GM12878 (cell line): ENCODE measurements at regions of chr17 and their contacts with region 1.

Region 1: GRCh38 chr17:39939588-39940419 is 12.3 kb downstream of the LRRC3C start:
- DNase-seq: peak; percentile 71
- ATAC-seq: peak; percentile 88
- H3K4me3 ChIP-seq: no peak overlapping the region
- H3K27ac ChIP-seq: peak overlapping the region; percentile 23
- H3K4me1 ChIP-seq: peaks cover 17% of the 10 kb centered on the region
- H3K27me3 ChIP-seq: no peaks in the 10 kb centered on the region
- CTCF ChIP-seq: peak; percentile 49 to 54 (median 50); a peak in 4 of 6 replicates
- EP300 ChIP-seq: peak; percentile 18 to 56; a peak in 2 of 4 replicates
- POLR2A ChIP-seq: no peak
- RAD21 ChIP-seq: peak; percentile 31; the same call in 1 of the 2 replicates

Region 2: DNA sequence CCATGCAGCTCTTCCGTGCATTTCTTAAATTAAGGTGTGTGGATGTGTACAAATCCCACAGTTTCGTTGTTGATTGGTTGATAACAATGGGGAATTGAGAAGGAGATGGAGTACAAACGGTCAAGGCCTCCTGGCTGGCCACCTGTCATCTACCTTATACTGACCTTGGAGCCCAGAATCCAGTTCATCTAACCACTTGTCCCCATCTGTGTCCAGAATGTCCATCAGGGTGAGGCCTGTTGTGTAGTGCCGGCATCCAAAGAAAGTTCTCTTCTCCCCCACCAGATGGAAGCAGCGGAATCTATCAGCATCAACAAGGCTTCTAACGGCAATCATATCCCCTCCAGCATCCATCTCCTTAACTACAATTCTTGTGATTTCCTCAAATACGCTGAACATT is 22.9 kb before region 1 on chr17:
- CTCF ChIA-PET with region 1: interaction called, 9 read pairs
- POLR2A ChIA-PET with region 1: interaction called, 13 read pairs
- RAD21 ChIA-PET with region 1: interaction called, 17 read pairs
- SMC1A ChIA-PET with region 1: interaction called, 40 read pairs
- in situ Hi-C with region 1: no loop called
- intact Hi-C with region 1: no loop called
- DNase-seq: no peak
- ATAC-seq: no peak
- H3K4me3 ChIP-seq: no peak overlapping the region
- H3K27ac ChIP-seq: no peak overlapping the region
- H3K4me1 ChIP-seq: peaks cover 33% of the 10 kb centered on the region
- H3K27me3 ChIP-seq: no peaks in the 10 kb centered on the region
- CTCF ChIP-seq: no peak
- EP300 ChIP-seq: no peak
- POLR2A ChIP-seq: no peak
- RAD21 ChIP-seq: no peak

Region 3: GRCh38 chr17:39927101-39927928 is 12.5 kb before region 1 on chr17 and contains the starts of genes LRRC3C and ORMDL3:
- CTCF ChIA-PET with region 1: interaction called, 33 read pairs
- POLR2A ChIA-PET with region 1: interaction called, 64 read pairs
- RAD21 ChIA-PET with region 1: interaction called, 35 read pairs
- SMC1A ChIA-PET with region 1: interaction called, 46 read pairs
- in situ Hi-C with region 1: no loop called
- intact Hi-C with region 1: no loop called
- DNase-seq: no peak
- ATAC-seq: peak; percentile 76
- H3K4me3 ChIP-seq: peak within 1 kb of the TSS; percentile 87
- H3K27ac ChIP-seq: peak within 1 kb of the TSS; percentile 82
- H3K4me1 ChIP-seq: peaks cover 22% of the 10 kb centered on the region
- H3K27me3 ChIP-seq: no peaks in the 10 kb centered on the region
- CTCF ChIP-seq: no peak
- EP300 ChIP-seq: 0 out of 4 replicates have a peak, but pooled peaks of 1 of the 2 experiments have one; percentile 10
- POLR2A ChIP-seq: peak; percentile 84
- RAD21 ChIP-seq: no peak
- polyA plus RNA-seq, gene LRRC3C: not detected
- polyA plus RNA-seq, gene ORMDL3: 8.8 to 21.1 TPM

Region 4: DNA sequence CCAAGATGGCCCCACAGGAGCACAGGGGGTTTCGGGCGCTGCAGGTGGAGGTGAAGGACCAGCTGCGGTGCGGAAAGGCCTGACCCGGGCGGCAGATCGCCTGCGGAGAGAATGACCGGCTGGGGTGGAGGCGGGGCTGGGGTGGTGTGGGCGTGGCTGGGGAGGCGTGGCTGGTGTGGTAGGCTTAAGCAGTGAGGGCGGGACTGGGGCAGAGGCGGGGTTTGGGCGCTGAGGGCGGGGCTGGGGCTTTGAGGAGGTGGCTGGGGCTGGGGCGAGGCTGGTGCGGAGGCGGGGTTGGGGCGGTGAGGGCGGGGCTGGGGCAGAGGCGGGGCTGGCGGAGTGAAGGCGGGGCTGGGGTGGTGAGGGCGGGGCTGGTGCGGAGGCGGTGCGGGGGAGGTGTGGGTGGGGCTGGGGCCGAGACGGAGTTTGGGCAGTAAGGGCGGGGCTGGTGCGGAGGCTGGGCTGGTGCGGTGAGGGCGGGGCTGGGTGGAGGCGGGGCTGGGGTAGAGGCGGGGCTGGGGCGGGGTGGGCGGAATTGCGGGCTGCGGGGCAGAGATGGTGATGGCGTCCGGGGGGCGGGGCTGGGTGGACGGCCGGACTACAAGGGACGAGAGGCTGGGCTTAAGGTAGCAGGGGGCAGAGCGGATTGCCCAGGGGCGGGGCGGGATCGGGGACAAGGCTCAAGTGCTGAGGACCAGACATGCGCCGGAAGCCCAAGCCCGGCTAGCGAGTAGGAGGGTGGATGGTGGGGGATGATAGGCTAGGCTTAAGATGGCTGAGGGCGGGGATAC is 13.1 kb after region 1 on chr17:
- CTCF ChIA-PET with region 1: interaction called, 98 read pairs
- POLR2A ChIA-PET with region 1: interaction called, 5 read pairs
- RAD21 ChIA-PET with region 1: interaction called, 25 read pairs
- SMC1A ChIA-PET with region 1: interaction called, 38 read pairs
- in situ Hi-C with region 1: no loop called
- intact Hi-C with region 1: loop called (anchors 2 kb)
- DNase-seq: peak; percentile 79
- ATAC-seq: peak; percentile 97
- H3K4me3 ChIP-seq: peak overlapping the region; percentile 76
- H3K27ac ChIP-seq: peak overlapping the region; percentile 40; the same call in 1 of the 2 replicates
- H3K4me1 ChIP-seq: peaks cover 3% of the 10 kb centered on the region; the same call in 1 of the 2 replicates
- H3K27me3 ChIP-seq: no peaks in the 10 kb centered on the region
- CTCF ChIP-seq: no peak
- EP300 ChIP-seq: no peak
- POLR2A ChIP-seq: peak; percentile 81; the same call in 1 of the 2 replicates
- RAD21 ChIP-seq: no peak

Region 5: GRCh38 chr17:39963829-39964228 is 24.0 kb after region 1 on chr17:
- CTCF ChIA-PET with region 1: interaction called, 98 read pairs
- POLR2A ChIA-PET with region 1: interaction called, 6 read pairs
- RAD21 ChIA-PET with region 1: interaction called, 25 read pairs
- SMC1A ChIA-PET with region 1: interaction called, 38 read pairs
- in situ Hi-C with region 1: no loop called
- intact Hi-C with region 1: loop called (anchors 2 kb)
- DNase-seq: no peak
- ATAC-seq: no peak
- H3K4me3 ChIP-seq: no peak overlapping the region
- H3K27ac ChIP-seq: no peak overlapping the region
- H3K4me1 ChIP-seq: no peaks in the 10 kb centered on the region; the same call in 1 of the 2 replicates
- H3K27me3 ChIP-seq: no peaks in the 10 kb centered on the region
- CTCF ChIP-seq: no peak
- EP300 ChIP-seq: no peak
- POLR2A ChIP-seq: no peak
- RAD21 ChIP-seq: no peak

Region 6: DNA sequence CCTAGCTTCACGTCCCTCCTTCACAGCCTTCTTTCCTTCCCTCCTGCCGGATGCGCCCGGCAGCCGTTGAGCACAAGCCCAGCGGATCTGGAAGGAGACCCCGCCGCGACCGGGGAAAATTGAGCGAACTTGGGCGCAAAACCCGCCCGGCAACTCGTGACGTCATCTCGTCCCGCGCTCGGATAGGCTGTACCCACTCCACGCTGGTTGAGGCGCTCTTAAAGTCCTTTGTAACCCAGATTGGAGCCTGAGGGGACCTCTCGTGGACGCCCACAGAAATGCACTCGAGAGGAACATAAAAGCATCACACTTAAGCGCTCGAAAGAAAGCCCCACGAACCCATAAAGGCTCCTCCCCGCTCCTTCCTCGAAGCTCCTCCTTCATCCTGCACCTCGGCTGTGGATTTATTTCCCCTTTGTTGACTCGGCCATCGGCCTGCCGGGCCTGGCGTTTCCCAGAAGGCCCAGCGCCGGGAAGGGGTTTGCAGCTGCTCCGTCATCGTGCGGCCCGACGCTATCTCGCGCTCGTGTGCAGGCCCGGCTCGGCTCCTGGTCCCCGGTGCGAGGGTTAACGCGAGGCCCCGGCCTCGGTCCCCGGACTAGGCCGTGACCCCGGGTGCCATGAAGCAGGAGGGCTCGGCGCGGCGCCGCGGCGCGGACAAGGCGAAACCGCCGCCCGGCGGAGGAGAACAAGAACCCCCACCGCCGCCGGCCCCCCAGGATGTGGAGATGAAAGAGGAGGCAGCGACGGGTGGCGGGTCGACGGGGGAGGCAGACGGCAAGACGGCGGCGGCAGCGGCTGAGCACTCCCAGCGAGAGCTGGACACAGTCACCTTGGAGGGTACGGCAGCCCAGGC is 40.8 kb after region 1 on chr17 and contains the start of gene PSMD3:
- CTCF ChIA-PET with region 1: interaction called, 39 read pairs
- POLR2A ChIA-PET with region 1: interaction called, 20 read pairs
- RAD21 ChIA-PET with region 1: interaction called, 39 read pairs
- SMC1A ChIA-PET with region 1: interaction called, 35 read pairs
- in situ Hi-C with region 1: no loop called
- intact Hi-C with region 1: loop called (anchors 1 kb)
- DNase-seq: peak; percentile 100
- ATAC-seq: peak; percentile 94
- H3K4me3 ChIP-seq: peak within 1 kb of the TSS; percentile 90
- H3K27ac ChIP-seq: peak within 1 kb of the TSS; percentile 90
- H3K4me1 ChIP-seq: peaks cover 6% of the 10 kb centered on the region
- H3K27me3 ChIP-seq: no peaks in the 10 kb centered on the region; a peak in 1 of 4 replicates
- CTCF ChIP-seq: peak; percentile 80 to 97 (median 92)
- EP300 ChIP-seq: peak; percentile 21 to 44; a peak in 1 of 4 replicates
- POLR2A ChIP-seq: peak; percentile 93
- RAD21 ChIP-seq: peak; percentile 92
- polyA plus RNA-seq, gene PSMD3: 2.2 to 2.6 TPM

Region 7: DNA sequence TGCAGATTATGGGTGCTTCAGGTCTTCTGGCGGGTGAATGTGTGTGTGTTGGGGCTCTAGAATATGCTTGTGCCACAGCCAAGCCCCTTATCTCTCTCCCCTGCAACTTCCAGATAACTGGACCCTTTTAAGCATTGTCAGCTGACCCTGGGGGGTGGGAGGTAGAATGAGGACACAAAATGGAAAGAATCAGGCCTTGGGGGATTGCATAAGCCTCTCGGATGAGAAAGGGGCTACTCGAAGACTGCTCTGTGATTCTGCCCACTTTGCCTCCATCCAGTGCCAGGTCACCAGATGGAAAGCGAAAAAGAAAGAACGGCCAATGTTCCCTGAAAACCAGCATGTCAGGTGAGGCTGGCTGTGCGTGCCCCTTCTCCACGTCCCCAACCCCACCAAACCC is 136.8 kb after region 1 on chr17:
- CTCF ChIA-PET with region 1: no interaction called
- POLR2A ChIA-PET with region 1: no interaction called
- RAD21 ChIA-PET with region 1: no interaction called
- SMC1A ChIA-PET with region 1: no interaction called
- in situ Hi-C with region 1: no loop called
- intact Hi-C with region 1: no loop called
- DNase-seq: no peak
- ATAC-seq: no peak
- H3K4me3 ChIP-seq: no peak overlapping the region
- H3K27ac ChIP-seq: no peak overlapping the region
- H3K4me1 ChIP-seq: peaks cover 4% of the 10 kb centered on the region; the same call in 1 of the 2 replicates
- H3K27me3 ChIP-seq: no peaks in the 10 kb centered on the region
- CTCF ChIP-seq: no peak
- EP300 ChIP-seq: no peak
- POLR2A ChIP-seq: no peak
- RAD21 ChIP-seq: no peak

Region 8: GRCh38 chr17:40371261-40371929 is 431.6 kb after region 1 on chr17:
- CTCF ChIA-PET with region 1: no interaction called
- POLR2A ChIA-PET with region 1: no interaction called
- RAD21 ChIA-PET with region 1: no interaction called
- SMC1A ChIA-PET with region 1: no interaction called
- in situ Hi-C with region 1: no loop called
- intact Hi-C with region 1: no loop called
- DNase-seq: no peak
- ATAC-seq: peak; percentile 76
- H3K4me3 ChIP-seq: no peak overlapping the region
- H3K27ac ChIP-seq: no peak overlapping the region
- H3K4me1 ChIP-seq: no peaks in the 10 kb centered on the region
- H3K27me3 ChIP-seq: no peaks in the 10 kb centered on the region
- CTCF ChIP-seq: no peak
- EP300 ChIP-seq: no peak
- POLR2A ChIP-seq: no peak
- RAD21 ChIP-seq: no peak

Region 9: DNA sequence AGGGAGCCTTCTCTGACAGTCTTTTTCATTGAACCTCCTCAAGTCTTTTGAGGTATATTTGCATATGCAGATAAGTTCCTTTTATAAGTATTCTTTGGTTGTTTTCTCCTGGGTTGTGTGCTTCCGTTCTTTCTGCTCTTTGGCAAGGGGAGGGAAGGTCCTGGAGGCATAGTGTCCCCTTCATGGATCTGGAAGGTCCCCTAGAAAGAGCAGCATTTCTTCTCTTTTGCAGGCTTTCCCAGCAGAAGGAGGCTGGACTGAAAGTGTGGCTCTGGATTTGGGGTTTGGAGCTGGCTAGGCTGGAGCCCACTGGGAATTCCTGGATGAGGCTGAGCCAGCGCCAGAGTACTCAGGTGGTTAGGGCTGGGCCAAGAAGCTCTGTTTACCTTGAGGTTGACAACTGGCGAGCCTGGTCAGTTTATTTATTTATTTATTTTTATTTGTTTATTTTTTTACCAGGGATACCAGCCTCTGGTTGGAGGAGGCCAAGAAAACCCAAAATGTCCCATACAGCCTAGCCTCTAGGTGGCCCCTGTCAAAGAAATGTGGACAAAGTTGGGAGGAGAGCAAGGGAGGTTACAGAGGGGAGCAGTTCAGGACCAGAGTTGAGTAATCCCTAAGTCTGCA is 483.3 kb after region 1 on chr17:
- CTCF ChIA-PET with region 1: no interaction called
- POLR2A ChIA-PET with region 1: no interaction called
- RAD21 ChIA-PET with region 1: no interaction called
- SMC1A ChIA-PET with region 1: no interaction called
- in situ Hi-C with region 1: no loop called
- intact Hi-C with region 1: no loop called
- DNase-seq: no peak
- ATAC-seq: no peak
- H3K4me3 ChIP-seq: no peak overlapping the region
- H3K27ac ChIP-seq: no peak overlapping the region
- H3K4me1 ChIP-seq: peaks cover 2% of the 10 kb centered on the region; the same call in 1 of the 2 replicates
- H3K27me3 ChIP-seq: no peaks in the 10 kb centered on the region; a peak in 1 of 4 replicates
- CTCF ChIP-seq: no peak; a peak in 1 of 6 replicates
- EP300 ChIP-seq: no peak
- POLR2A ChIP-seq: no peak
- RAD21 ChIP-seq: no peak